H1 (cell line): ENCODE measurements at regions of chr22 and their contacts with region 1.

Region 1: GRCh38 chr22:37594237-37594636 is 14.3 kb upstream of the LGALS2 start:
- DNase-seq: no peak
- H3K4me3 ChIP-seq: no peak overlapping the region
- H3K27ac ChIP-seq: no peak overlapping the region
- H3K4me1 ChIP-seq: no peaks in the 10 kb centered on the region
- H3K27me3 ChIP-seq: no peaks in the 10 kb centered on the region
- CTCF ChIP-seq: peak in 2 of 3 experiments; percentile 29 to 33; a peak in 2 of 4 replicates
- EP300 ChIP-seq: no peak
- POLR2A ChIP-seq: no peak
- RAD21 ChIP-seq: no peak

Region 2: DNA sequence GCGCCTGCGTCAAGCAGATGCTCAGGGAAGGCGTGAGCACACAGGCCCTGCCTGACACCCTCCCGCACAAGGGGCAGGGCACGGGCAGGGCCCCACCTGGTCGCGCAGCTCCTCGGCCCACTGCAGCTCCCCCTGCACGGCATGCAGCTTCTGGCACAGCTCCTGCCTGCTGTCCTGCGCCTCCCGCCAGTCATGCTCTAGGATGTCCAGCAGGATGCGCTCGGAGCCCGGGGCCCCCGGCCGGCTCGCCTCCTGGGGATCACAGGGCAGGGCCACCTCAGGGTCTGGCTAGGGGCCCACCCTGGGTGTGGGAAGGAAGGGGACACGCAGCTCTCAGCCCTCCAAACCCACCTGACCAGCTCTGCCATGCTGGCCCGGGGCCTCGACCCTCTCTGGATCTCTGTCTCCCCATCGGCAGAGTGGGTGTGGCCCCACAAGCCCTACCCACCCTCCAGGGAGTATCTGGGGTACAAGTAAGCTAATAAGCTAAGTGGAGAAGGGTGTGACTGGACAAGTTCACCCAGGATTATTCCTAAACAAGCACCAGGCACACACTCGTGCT is 85.7 kb before region 1 on chr22:
- CTCF ChIA-PET with region 1: interaction called, 11 read pairs
- POLR2A ChIA-PET with region 1: no interaction called
- DNase-seq: no peak
- H3K4me3 ChIP-seq: no peak overlapping the region
- H3K27ac ChIP-seq: no peak overlapping the region
- H3K4me1 ChIP-seq: peaks cover 0 to 2% (median 1%) of the 10 kb centered on the region in 4 experiments; a peak in 3 of 7 replicates
- H3K27me3 ChIP-seq: no peaks in the 10 kb centered on the region; a peak in 1 of 7 replicates
- CTCF ChIP-seq: no peak; a peak in 1 of 4 replicates
- EP300 ChIP-seq: no peak
- POLR2A ChIP-seq: no peak
- RAD21 ChIP-seq: no peak; a peak in 1 of 4 replicates

Region 3: GRCh38 chr22:37538590-37539357 is 55.5 kb before region 1 on chr22:
- CTCF ChIA-PET with region 1: interaction called, 1,347 read pairs
- POLR2A ChIA-PET with region 1: interaction called, 4 read pairs
- DNase-seq: peak; percentile 88 to 95
- H3K4me3 ChIP-seq: no peak overlapping the region
- H3K27ac ChIP-seq: no peak overlapping the region
- H3K4me1 ChIP-seq: peaks cover 0 to 4% (median 0%) of the 10 kb centered on the region in 4 experiments; a peak in 2 of 7 replicates
- H3K27me3 ChIP-seq: no peaks in the 10 kb centered on the region; a peak in 1 of 7 replicates
- CTCF ChIP-seq: peak; percentile 99 to 100 (median 99)
- EP300 ChIP-seq: no peak
- POLR2A ChIP-seq: no peak
- RAD21 ChIP-seq: peak; percentile 100

Region 4: DNA sequence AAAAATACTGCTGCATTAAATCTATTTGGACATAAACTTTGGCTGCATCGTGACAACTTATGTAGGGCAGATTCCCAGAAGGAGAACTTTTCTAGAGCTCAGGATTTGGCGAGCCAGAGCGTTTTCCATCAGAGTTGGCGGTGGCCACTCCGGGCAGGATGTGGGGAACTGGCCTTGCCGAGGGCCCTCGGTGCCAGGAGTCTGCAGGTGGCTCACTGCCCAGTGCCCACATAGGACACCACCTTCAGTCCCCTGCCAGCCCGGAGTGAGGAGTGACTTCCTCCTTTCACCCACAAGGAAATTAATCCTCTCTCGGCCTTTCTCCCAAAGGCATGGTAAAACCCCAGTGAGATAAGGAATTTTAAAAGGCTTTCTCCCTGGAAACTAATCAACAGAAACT is 12.7 kb before region 1 on chr22:
- CTCF ChIA-PET with region 1: interaction called, 11 read pairs
- POLR2A ChIA-PET with region 1: interaction called, 5 read pairs
- DNase-seq: no peak
- H3K4me3 ChIP-seq: no peak overlapping the region
- H3K27ac ChIP-seq: no peak overlapping the region
- H3K4me1 ChIP-seq: peaks cover 0 to 8% (median 2%) of the 10 kb centered on the region in 4 experiments; a peak in 4 of 7 replicates
- H3K27me3 ChIP-seq: no peaks in the 10 kb centered on the region
- CTCF ChIP-seq: no peak
- EP300 ChIP-seq: no peak
- POLR2A ChIP-seq: no peak
- RAD21 ChIP-seq: no peak

Region 5: DNA sequence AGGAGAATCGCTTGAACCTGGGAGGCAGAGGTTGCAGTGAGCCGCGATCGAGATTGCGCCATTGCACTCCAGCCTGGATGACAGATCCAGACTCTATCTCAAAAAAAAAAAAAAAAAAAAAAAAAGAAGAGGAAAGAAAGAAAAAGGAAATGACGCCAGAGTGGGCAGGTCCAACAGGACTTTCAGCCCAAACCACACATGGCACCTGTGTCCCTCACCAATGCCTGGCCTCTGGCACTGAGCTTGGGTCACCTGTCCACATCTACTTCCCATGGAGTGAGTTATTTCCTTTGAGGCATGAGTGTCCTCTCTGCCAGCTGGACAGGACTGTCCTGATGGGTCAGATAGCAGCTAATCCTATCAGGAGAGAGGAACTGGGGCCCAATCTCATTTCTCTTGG is 198.3 kb after region 1 on chr22:
- CTCF ChIA-PET with region 1: no interaction called
- POLR2A ChIA-PET with region 1: no interaction called
- DNase-seq: no peak
- H3K4me3 ChIP-seq: no peak overlapping the region
- H3K27ac ChIP-seq: no peak overlapping the region
- H3K4me1 ChIP-seq: no peaks in the 10 kb centered on the region
- H3K27me3 ChIP-seq: peaks cover 0 to 6% (median under 1%) of the 10 kb centered on the region in 4 experiments; a peak in 2 of 7 replicates
- CTCF ChIP-seq: no peak
- EP300 ChIP-seq: no peak
- POLR2A ChIP-seq: no peak
- RAD21 ChIP-seq: no peak